GM12878 (cell line): ENCODE measurements at regions of chr16 and their contacts with region 1.

Region 1: DNA sequence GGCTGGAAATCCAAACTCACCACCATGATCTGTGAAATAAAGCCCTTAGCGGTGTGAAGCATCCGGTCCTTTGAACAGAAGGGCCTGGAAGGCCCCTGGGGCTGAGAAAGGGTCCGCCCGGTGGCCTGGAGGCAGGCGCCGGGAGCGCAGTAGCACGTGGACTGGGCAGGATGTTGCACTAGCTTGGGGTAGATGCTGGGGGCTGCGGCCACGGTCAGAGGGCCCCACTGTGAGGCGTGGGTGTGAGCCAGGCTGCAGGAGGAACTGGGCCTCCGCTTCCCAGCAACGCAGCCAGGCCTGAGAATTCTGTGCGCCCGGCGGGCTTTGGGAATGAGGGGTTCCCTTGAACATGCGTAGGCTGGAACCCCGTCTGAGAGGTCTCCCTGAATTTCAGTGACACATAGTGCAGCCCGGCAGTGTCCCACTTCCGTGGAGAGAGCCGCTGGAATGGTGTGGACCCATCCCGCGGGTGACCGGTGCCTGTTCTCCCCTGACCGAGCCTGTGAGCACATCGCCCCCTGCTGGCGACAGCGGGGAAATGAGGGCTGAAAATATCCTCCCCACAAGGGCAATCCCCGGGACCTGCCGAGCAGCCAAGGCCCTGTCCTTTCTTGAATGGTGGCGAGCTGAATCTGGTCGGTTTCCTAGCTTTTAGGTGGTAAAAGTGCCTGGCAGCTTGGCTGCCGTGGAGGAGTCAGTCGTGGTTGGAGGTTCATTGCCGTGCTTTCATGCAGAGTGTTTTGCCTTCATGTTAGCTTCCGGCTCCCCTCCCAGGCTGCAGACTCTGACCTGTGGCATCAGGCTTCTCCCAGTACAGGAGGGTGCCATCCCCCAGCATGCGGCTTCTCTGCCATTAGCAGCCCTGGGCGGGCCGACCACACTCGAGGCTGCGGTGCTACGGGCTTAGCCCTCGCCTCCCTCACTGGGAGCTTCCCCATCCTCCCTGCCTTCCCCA is 43.8 kb downstream of the DNAJA2 start:
- DNase-seq: no peak
- ATAC-seq: peak; percentile 97
- H3K4me3 ChIP-seq: no peak overlapping the region
- H3K27ac ChIP-seq: no peak overlapping the region
- H3K4me1 ChIP-seq: no peaks in the 10 kb centered on the region
- H3K27me3 ChIP-seq: no peaks in the 10 kb centered on the region
- CTCF ChIP-seq: peak; percentile 88 to 91 (median 91)
- EP300 ChIP-seq: no peak
- POLR2A ChIP-seq: no peak
- RAD21 ChIP-seq: peak; percentile 81

Region 2: GRCh38 chr16:46555951-46556350 is 373.7 kb before region 1 on chr16:
- CTCF ChIA-PET with region 1: interaction called, 4 read pairs
- POLR2A ChIA-PET with region 1: no interaction called
- RAD21 ChIA-PET with region 1: no interaction called
- SMC1A ChIA-PET with region 1: no interaction called
- in situ Hi-C with region 1: no loop called
- intact Hi-C with region 1: loop called (anchors 2 kb)
- DNase-seq: no peak
- ATAC-seq: no peak
- H3K4me3 ChIP-seq: no peak overlapping the region
- H3K27ac ChIP-seq: no peak overlapping the region
- H3K4me1 ChIP-seq: no peaks in the 10 kb centered on the region
- H3K27me3 ChIP-seq: no peaks in the 10 kb centered on the region
- CTCF ChIP-seq: no peak
- EP300 ChIP-seq: no peak
- POLR2A ChIP-seq: no peak
- RAD21 ChIP-seq: no peak

Region 3: DNA sequence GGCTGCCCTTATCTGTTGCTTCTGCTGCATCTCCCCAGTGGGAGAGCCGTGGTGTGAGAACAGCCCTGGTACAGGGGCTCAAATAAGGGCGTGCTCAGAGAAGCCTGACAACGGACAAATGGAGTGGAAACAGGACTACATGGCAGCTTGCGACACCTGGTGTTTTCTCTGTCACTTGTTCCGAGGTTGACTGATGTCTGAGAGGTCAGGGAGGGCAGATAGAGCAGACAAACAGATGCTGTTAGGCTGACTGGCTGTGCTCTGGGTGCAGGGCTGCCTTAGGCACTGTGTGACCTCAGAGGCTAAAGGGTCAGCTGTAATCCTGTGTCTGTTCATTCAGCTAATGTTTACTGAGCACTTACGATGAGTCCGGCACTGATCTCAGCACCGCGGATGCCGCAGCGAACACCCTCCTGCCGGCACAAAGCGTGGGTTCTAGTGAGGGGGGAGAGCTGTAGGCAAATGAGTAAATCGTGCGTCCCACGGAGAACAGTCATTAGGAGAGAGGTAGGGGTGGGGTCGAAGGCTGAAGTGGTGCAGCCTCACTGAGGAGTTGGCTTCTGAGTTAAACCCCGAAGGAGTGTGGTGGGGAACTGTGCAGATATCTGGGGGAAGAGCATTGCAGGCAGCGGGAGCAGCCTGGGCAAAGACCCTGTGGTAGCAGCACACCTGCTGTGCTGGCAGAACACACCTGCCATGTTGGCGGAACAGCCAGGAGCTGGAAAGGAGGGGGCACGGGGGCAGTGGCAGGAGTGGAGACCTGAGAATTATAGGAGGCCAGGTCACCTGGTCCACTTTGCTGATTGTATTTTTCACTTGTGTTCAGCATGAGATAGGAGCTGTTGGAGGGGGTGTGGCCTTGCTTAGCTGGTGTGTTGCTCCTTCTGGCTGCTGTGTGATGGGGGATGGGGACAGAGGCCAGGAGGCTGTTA is 10.5 kb before region 1 on chr16:
- CTCF ChIA-PET with region 1: interaction called, 19 read pairs
- POLR2A ChIA-PET with region 1: no interaction called
- RAD21 ChIA-PET with region 1: interaction called, 7 read pairs
- SMC1A ChIA-PET with region 1: interaction called, 4 read pairs
- in situ Hi-C with region 1: no loop called
- intact Hi-C with region 1: no loop called
- DNase-seq: peak; percentile 54
- ATAC-seq: peak; percentile 84
- H3K4me3 ChIP-seq: peak overlapping the region; percentile 37; the same call in 1 of the 2 replicates
- H3K27ac ChIP-seq: 0 out of 2 replicates have a peak overlapping the region, but pooled peaks have one; percentile 39
- H3K4me1 ChIP-seq: peaks cover 19% of the 10 kb centered on the region
- H3K27me3 ChIP-seq: no peaks in the 10 kb centered on the region
- CTCF ChIP-seq: peak; percentile 37 to 67 (median 51); a peak in 5 of 6 replicates
- EP300 ChIP-seq: no peak
- POLR2A ChIP-seq: peak; percentile 51
- RAD21 ChIP-seq: peak; percentile 69